Activated CD4-positive, alpha-beta memory T cell treated with anti-CD3 and anti-CD28 coated beads, Interleukin-2, amount 10 ng/mL, durations not matched to agents 7 days and 5 days (primary cell): ENCODE measurements at regions of chr4 and their contacts with region 1.

Region 1: GRCh38 chr4:51895813-51896408 is 53.0 kb downstream of the DCUN1D4 start:
- DNase-seq: peak; percentile 58
- H3K4me3 Mint-ChIP-seq: no peak overlapping the region
- H3K27ac Mint-ChIP-seq: peak overlapping the region; percentile 38
- H3K4me1 Mint-ChIP-seq: peaks cover 17% of the 10 kb centered on the region
- H3K27me3 Mint-ChIP-seq: no peaks in the 10 kb centered on the region

Region 2: DNA sequence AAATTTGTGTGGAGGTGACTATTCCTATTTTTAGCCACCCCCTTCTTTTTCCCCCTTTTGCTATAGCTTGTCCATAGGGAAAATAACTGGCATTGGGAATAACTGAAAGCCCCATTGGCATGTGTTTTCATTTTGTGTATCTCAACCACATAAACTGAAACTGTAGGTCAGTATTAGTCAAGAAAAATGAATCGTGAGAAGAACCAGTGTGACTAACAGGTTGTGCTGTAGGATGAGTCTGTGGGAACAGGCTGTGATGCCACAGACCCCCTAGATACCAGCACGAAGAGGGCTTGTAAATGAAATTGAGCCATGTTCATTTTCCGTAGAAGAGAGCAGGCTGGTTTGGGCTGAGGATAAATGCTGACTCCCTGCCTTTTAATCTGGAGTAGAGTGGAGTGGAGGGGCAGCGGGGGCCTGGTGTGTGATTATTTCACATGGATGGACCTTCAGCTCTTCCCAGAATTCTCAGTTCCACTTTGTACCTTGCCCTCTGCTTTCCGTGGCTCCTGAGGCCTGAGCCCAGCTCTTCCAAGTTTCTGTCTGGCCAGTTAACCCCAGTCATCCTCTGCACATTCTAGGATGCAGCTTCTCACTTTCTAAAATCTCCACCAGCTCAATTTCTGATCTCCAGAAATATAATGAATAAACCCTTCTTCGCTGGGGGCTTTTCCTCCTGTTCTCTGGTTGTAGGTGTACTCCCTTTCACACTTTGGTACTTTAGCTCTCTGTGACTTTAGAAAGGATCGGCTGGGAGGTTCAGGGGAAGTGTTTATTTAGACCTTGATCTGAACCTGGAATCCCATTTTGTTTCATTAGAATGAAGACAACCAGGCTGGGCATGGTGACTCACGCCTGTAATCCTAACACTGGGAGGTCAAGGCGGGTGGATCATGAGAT is 15.6 kb before region 1 on chr4:
- CTCF ChIA-PET with region 1: no interaction called
- POLR2A ChIA-PET with region 1: no interaction called
- DNase-seq: no peak
- H3K4me3 Mint-ChIP-seq: no peak overlapping the region
- H3K27ac Mint-ChIP-seq: no peak overlapping the region
- H3K4me1 Mint-ChIP-seq: peaks cover 2% of the 10 kb centered on the region
- H3K27me3 Mint-ChIP-seq: no peaks in the 10 kb centered on the region

Region 3: DNA sequence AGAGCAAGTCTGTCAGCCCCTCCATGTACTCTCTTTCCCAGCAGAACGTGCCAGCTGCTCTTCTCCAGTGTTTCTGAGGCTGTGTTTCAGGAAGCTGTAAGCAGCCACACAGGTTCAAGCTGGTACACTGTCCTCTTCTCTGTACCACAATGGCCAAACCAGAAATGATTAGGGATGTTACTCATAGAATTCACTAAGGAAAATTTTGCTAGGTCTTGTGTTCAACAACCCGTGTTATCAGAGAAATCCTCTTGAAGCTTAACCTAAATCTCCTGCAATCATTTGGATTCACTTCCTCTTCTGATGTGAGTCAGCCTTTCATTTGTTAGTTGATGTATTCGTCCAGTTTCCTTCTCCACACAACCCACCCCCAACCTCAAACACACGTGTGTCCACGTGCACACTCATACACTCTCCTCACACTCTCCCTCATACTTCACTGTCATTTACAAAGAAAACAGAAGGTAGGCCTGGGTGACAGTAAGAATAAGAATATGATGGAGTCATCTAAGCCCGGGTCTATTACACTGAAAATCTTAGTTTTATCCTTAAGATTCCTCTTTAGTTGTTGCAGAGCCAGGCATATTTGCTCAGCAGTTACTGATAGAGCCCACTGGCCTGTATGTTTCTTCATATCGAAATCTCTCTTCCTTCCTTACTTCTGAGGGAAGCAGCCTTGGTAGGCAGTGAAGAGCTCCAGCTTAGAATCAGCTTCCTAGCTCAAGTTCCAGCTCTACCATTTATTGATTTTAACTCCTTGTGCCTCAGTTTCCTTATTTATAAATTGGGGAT is 10.5 kb after region 1 on chr4:
- CTCF ChIA-PET with region 1: interaction called, 11 read pairs
- POLR2A ChIA-PET with region 1: interaction called, 4 read pairs
- DNase-seq: no peak
- H3K4me3 Mint-ChIP-seq: no peak overlapping the region
- H3K27ac Mint-ChIP-seq: peak overlapping the region; percentile 52
- H3K4me1 Mint-ChIP-seq: peaks cover 8% of the 10 kb centered on the region
- H3K27me3 Mint-ChIP-seq: no peaks in the 10 kb centered on the region

Region 4: DNA sequence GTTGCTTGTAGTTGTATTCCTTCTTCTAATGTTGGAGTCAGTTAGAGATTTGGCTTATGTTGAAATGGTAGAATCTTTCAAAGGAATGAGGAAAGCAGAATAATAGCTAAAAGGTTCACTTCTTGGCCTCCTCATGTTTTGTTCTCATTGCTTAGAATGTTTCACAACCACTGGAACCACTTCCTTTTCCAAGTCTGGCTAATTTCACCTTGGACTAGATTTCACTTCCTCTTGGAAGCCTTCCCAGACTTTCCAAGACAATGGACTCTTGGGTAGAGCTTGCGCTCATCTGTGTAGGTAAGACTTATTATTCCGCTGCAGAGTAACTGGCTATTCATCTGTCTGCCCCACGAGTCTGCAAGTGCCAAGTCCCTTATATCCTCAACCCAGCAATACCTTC is 163.5 kb after region 1 on chr4:
- CTCF ChIA-PET with region 1: no interaction called
- POLR2A ChIA-PET with region 1: no interaction called
- DNase-seq: no peak
- H3K4me3 Mint-ChIP-seq: no peak overlapping the region
- H3K27ac Mint-ChIP-seq: no peak overlapping the region
- H3K4me1 Mint-ChIP-seq: no peaks in the 10 kb centered on the region
- H3K27me3 Mint-ChIP-seq: peaks cover 12% of the 10 kb centered on the region